ENCODE measurements at regions of chr20 and their contacts with region 1.

Region 1: GRCh38 chr20:34876162-34877001 is at the start of gene ACSS2:
- DNase-seq: peak; percentile 99
- H3K4me3 Mint-ChIP-seq: peak within 1 kb of the TSS; percentile 96
- H3K27ac Mint-ChIP-seq: peak within 1 kb of the TSS; percentile 89
- H3K4me1 Mint-ChIP-seq: peaks cover 61% of the 10 kb centered on the region
- H3K27me3 Mint-ChIP-seq: no peaks in the 10 kb centered on the region
- total RNA-seq, gene ACSS2: 44.8 and 54.4 TPM in 2 replicates

Region 2: GRCh38 chr20:34825530-34826362 is 50.6 kb before region 1 on chr20 and contains the start of gene NCOA6:
- intact Hi-C with region 1: loop called (anchors 1 kb)
- DNase-seq: peak; percentile 92
- H3K4me3 Mint-ChIP-seq: peak within 1 kb of the TSS; percentile 95
- H3K27ac Mint-ChIP-seq: peak within 1 kb of the TSS; percentile 93
- H3K4me1 Mint-ChIP-seq: peaks cover 28% of the 10 kb centered on the region
- H3K27me3 Mint-ChIP-seq: peaks cover 11% of the 10 kb centered on the region
- total RNA-seq, gene NCOA6: 25.1 and 26.8 TPM in 2 replicates

Region 3: DNA sequence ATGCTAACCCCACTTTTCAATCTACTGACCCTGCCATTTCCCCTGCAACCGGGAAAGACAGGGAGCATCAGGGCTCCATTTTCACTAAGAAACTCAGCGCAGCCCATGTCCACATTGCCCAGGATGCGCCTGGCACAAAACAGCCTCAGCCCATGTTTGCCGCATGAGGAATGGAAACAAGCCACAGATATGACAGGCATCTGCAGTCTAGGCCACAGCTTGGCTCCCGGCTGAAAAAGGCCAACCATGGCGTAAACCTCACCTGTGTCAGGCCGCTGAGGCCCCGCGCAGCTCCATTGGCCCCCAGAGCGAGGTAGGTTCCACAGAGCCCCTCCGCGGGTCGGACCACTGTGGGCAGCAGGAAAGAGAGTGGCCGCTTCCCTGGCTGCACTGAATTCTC is 25.4 kb before region 1 on chr20:
- intact Hi-C with region 1: no loop called
- DNase-seq: no peak
- H3K4me3 Mint-ChIP-seq: no peak overlapping the region
- H3K27ac Mint-ChIP-seq: no peak overlapping the region
- H3K4me1 Mint-ChIP-seq: peaks cover 2% of the 10 kb centered on the region
- H3K27me3 Mint-ChIP-seq: no peaks in the 10 kb centered on the region

Region 4: DNA sequence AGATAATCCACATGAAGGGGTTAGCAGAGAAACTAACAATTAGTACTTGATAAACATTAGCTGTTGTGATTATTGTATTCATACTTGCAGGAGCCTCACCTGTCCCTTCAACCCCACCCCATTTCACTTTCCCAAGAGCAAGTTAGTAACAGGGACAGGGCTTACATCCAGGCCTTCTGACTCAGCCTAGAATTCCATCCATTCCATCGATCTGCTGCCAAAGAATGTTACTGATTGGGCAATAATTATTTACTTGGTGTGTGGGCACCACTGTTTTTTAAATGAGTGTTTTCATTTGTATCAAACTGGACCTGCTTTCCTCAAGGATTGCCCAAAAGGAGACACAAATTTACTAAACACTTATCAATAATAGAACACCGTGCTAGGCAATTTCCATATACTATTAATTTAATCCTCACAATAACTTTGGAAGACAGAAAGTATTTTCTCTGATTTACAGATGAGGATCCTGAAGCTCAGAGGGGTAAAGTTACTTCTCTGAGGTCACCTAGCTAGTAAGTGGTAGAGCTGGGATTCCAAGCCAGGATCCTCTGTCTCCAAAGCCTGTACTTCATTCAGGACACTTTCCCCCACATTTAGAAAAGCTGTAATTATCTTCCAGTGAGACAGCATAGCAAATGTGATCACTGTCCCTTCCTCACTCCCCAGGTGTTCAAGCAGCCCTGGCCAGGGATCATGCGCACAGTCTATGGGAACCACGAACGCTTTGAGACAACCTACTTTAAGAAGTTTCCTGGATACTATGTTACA is 46.5 kb after region 1 on chr20:
- intact Hi-C with region 1: loop called (anchors 1 kb)
- DNase-seq: no peak
- H3K4me3 Mint-ChIP-seq: no peak overlapping the region
- H3K27ac Mint-ChIP-seq: no peak overlapping the region
- H3K4me1 Mint-ChIP-seq: peaks cover 38% of the 10 kb centered on the region
- H3K27me3 Mint-ChIP-seq: no peaks in the 10 kb centered on the region

Region 5: DNA sequence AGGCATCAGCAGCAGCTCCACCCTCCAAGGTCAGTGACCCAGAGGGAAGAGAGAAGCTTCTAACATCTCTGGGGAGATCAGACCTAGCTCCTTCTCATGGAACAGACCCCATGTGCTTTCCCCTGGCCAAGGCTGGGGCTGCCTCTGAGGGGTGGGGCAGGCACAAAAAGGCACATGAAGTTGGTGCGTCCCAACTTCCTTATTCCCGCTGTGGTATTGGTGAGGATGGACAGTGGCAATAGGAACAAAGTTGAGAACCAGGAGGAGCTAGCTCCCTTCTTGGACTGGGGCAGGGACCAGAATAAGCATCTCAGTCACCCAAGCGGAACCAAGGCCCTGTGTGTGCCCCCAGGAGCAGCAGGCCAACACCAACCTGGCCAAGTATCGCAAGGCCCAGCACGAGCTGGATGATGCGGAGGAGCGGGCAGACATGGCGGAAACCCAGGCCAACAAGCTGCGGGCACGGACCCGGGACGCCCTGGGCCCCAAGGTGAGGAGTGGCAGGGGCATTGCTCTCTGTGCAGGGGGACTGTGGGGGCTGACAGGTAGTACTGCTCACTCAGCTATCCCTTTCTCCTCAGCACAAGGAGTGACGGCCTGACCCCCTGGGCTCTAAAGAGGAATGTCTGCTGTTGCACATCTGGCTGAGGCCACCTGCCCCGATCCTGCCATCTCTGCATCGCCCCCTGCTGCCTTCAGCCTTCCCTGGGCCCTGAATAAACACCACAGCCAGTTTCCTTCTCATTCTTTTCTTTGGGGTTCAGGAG is 125.4 kb after region 1 on chr20:
- intact Hi-C with region 1: loop called (anchors 5 kb)
- DNase-seq: peak; percentile 69
- H3K4me3 Mint-ChIP-seq: no peak overlapping the region
- H3K27ac Mint-ChIP-seq: no peak overlapping the region
- H3K4me1 Mint-ChIP-seq: no peaks in the 10 kb centered on the region
- H3K27me3 Mint-ChIP-seq: no peaks in the 10 kb centered on the region

Region 6: DNA sequence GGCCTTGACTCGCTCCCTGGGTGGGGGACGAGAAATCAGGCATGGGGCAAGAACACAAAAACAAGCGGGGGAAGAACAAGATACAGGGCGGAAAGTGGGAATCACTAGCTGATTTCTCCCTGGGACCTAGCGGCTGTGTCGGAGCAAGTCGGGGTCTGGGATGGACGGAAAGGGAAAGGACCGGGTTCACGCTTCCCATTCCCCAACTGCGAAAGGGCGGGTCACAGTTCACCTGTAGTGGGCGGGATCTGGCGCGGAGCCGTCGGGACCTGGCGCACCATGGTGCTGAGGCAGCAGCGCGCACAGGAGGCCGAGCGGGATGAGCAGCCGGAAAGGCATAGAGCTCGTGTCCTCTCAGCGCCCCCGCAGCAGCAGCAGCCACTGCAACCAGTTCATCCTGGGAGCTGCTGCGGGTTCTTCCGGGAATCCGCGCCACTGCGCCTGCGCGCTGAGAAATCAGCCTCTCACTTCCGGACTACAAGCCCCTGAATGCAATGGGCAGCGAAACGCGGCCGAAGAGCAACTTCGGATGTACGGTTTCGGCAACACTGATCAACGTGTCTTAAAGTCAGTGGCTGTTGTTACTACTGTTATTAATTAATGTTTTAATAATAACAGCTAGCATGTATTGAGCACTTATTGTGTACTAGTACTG is 270.7 kb after region 1 on chr20 and contains the start of gene EDEM2:
- intact Hi-C with region 1: loop called (anchors 2 kb)
- DNase-seq: peak; percentile 98
- H3K4me3 Mint-ChIP-seq: peak within 1 kb of the TSS; percentile 91
- H3K27ac Mint-ChIP-seq: peak within 1 kb of the TSS; percentile 89
- H3K4me1 Mint-ChIP-seq: peaks cover 25% of the 10 kb centered on the region
- H3K27me3 Mint-ChIP-seq: peaks cover 3% of the 10 kb centered on the region
- total RNA-seq, gene EDEM2: 19.2 and 21.1 TPM in 2 replicates

Region 7: DNA sequence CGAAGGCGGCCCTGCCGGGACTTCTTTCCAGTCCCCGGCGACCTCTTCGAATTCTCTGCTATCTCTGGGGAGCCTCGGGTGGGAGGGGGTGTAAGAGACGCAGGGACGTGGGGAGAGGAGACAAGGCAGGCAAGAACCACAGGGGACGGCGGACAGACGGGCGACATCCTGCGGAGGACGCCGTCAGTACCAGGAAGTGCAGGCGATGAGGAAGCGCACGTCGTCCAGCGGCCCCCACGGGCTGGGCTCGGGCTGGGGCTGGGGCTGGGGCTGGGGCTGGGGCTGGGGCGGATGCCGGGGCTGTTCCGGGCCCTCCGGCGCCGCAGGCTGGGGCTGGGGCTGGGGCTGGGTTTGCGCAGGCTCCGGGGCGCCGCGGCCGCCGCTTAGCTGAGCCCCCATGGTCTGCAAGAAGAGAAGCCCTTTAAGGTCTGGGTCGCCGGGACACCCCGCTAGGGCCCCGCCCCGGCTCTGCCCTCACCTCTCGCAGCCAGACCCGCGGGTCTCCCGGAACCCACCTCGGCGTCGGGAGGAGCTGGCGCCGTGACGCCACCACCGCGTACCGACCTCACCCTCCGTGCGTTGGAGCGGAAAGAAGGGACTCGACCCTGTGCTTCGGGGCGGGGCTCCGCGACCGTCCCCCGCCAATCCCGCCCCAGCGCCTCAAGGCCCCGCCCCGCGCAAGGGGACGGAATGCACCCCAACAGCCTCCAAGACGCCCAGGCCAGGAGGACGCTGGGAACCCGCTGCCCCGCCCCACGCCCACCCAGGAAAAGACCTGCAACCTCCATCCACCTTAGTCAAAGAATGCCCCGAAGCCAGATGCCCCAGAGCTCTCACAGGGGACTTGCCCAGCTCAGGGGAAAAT is 401.4 kb after region 1 on chr20 and contains the start of gene MMP24OS:
- intact Hi-C with region 1: loop called (anchors 5 kb)
- DNase-seq: peak; percentile 97
- H3K4me3 Mint-ChIP-seq: peak within 1 kb of the TSS; percentile 99
- H3K27ac Mint-ChIP-seq: peak within 1 kb of the TSS; percentile 97
- H3K4me1 Mint-ChIP-seq: peaks cover 30% of the 10 kb centered on the region
- H3K27me3 Mint-ChIP-seq: no peaks in the 10 kb centered on the region
- total RNA-seq, gene MMP24OS: 26.2 and 27.3 TPM in 2 replicates

Measured in activated CD4-positive, alpha-beta T cell treated with anti-CD3 and anti-CD28 coated beads, Interleukin-2, amount 10 ng/mL, durations not matched to agents 24 days and 14 days (primary cell).